ENCODE measurements at regions of chr1 and their contacts with region 1.

Region 1: DNA sequence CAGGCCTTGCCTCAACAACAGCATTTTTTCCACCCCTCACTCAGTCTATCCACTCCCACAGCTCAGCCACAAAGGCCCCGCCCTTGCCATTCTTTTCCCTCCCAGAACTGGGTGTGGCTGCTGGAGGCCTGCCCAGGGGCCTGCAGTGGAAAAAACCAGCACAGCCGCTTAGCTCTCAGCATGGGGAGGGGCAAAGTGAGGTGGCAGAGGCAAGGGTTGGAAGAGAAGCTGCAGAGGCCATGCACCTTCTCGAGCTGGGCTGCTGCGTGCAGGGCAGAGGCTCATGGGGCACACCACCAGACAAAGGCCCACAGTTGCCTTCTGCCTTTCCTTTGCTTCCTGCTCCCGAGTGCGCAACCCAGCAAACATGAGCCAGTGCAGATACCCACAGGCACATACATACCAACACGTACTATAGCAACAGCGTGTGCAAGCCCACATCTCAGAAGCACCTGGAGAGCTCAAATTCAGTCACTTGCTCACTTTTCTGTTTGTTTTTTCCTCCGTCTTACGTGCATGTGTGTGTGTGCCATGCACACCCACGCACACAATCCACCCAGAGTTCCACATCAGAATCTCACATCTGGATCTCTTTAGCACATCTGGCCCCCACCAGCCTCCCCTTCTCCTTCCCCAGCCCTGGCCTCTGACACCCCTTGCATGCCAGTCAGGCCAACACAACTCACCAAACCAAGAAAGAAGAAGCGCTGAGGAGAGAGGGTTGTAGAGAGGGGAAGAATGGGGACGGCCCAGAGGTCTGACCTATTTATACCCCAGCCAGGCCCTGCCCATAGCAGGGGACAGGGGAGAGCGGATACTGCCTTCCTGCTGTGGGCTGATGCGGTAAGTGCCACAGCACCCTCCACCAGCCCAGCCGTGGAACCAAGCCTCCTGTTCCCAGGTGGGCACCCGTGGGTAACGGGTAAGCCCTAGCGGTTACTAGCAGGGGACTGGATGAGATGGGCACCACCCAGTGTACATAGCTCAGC is at the start of gene S100A4:
- DNase-seq: peak; percentile 56
- ATAC-seq: peak; percentile 78
- H3K4me3 Mint-ChIP-seq: peak within 1 kb of the TSS; percentile 95
- H3K27ac Mint-ChIP-seq: peak within 1 kb of the TSS; percentile 97
- H3K4me1 Mint-ChIP-seq: peaks cover 58% of the 10 kb centered on the region
- H3K27me3 Mint-ChIP-seq: peaks cover 2% of the 10 kb centered on the region
- CTCF ChIP-seq: no peak
- total RNA-seq, gene S100A4: 315 and 398 TPM in 2 replicates

Region 2: GRCh38 chr1:153532769-153533599 is 12.4 kb before region 1 on chr1:
- CTCF ChIA-PET with region 1: interaction called, 7 read pairs
- POLR2A ChIA-PET with region 1: interaction called, 101 read pairs
- intact Hi-C with region 1: loop called (anchors 1 kb)
- DNase-seq: peak; percentile 60
- ATAC-seq: peak; percentile 26
- H3K4me3 Mint-ChIP-seq: peak overlapping the region; percentile 48
- H3K27ac Mint-ChIP-seq: peak overlapping the region; percentile 13
- H3K4me1 Mint-ChIP-seq: peaks cover 45% of the 10 kb centered on the region
- H3K27me3 Mint-ChIP-seq: no peaks in the 10 kb centered on the region
- CTCF ChIP-seq: no peak

Region 3: GRCh38 chr1:153658400-153659174 is 113.2 kb after region 1 on chr1 and contains the start of gene SNAPIN:
- CTCF ChIA-PET with region 1: no interaction called
- POLR2A ChIA-PET with region 1: interaction called, 14 read pairs
- intact Hi-C with region 1: no loop called
- DNase-seq: peak; percentile 94
- ATAC-seq: peak; percentile 99
- H3K4me3 Mint-ChIP-seq: peak within 1 kb of the TSS; percentile 96
- H3K27ac Mint-ChIP-seq: peak within 1 kb of the TSS; percentile 91
- H3K4me1 Mint-ChIP-seq: peaks cover 14% of the 10 kb centered on the region
- H3K27me3 Mint-ChIP-seq: no peaks in the 10 kb centered on the region
- CTCF ChIP-seq: no peak
- total RNA-seq, gene SNAPIN: 50.4 and 51.5 TPM in 2 replicates

Measured in activated B cell treated with CpG ODN at 0.5 μM for 24 hours (primary cell).